CD8-positive, alpha-beta T cell (primary cell): ENCODE measurements at regions of chr14 and their contacts with region 1.

Region 1: DNA sequence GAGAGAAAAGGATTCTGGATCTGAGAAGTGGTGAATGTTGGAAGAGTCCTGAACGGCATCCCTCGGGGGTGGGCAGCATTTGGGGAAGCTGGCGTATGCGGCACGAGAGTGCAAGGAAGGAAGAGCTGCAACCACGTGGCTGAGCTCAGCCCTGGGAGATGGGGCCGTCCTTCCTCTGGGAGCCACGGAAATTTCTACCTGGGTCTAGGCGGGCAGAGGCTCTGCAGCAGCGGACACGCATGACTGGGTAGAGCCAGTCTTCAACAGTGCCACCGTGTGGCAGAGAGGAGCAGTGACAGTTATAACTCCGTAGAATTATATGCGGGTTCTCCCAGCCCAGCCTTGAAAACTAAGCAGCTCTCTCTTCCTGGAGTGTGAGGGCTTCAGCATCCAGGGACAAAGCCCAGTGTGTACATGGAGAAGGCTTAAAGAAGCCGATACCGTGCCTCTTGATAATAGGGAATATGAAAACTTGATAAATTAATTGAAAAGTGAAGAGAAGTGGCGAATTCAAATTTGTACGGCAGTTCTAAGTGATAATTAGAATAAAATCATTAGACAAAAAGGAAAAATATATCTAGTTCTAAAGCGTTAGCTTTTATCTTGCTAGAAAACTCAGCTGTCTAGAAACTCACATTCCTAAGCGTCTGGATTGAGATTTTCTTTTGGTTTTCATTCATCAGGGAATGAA is 82.9 kb upstream of the STXBP6 start:
- DNase-seq: peak; percentile 4 to 74 (median 29)
- ATAC-seq: peak; percentile 71
- H3K4me3 ChIP-seq: no peak overlapping the region
- H3K4me3 Mint-ChIP-seq: no peak overlapping the region
- H3K27ac ChIP-seq: no peak overlapping the region
- H3K27ac Mint-ChIP-seq: no peak overlapping the region
- H3K4me1 ChIP-seq: no peaks in the 10 kb centered on the region
- H3K4me1 Mint-ChIP-seq: no peaks in the 10 kb centered on the region
- H3K27me3 ChIP-seq: peaks cover 0 to 7% of the 10 kb centered on the region in 2 experiments
- H3K27me3 Mint-ChIP-seq: peaks cover 41% of the 10 kb centered on the region
- CTCF ChIP-seq: peak; percentile 60

Region 2: GRCh38 chr14:24481622-24482324 is 651.1 kb before region 1 on chr14:
- CTCF ChIA-PET with region 1: no interaction called
- POLR2A ChIA-PET with region 1: no interaction called
- intact Hi-C with region 1: loop called (anchors 5 kb)
- DNase-seq: peak in 6 of 9 experiments; percentile 11 to 55 (median 32)
- ATAC-seq: no peak
- H3K4me3 ChIP-seq: no peak overlapping the region
- H3K4me3 Mint-ChIP-seq: no peak overlapping the region
- H3K27ac ChIP-seq: no peak overlapping the region
- H3K27ac Mint-ChIP-seq: no peak overlapping the region
- H3K4me1 ChIP-seq: peaks cover 15% of the 10 kb centered on the region
- H3K4me1 Mint-ChIP-seq: no peaks in the 10 kb centered on the region
- H3K27me3 ChIP-seq: no peaks in the 10 kb centered on the region
- H3K27me3 Mint-ChIP-seq: no peaks in the 10 kb centered on the region
- CTCF ChIP-seq: no peak

Region 3: GRCh38 chr14:25178255-25178654 is 45.4 kb after region 1 on chr14:
- CTCF ChIA-PET with region 1: no interaction called
- POLR2A ChIA-PET with region 1: no interaction called
- intact Hi-C with region 1: no loop called
- DNase-seq: no peak
- ATAC-seq: no peak
- H3K4me3 ChIP-seq: no peak overlapping the region
- H3K4me3 Mint-ChIP-seq: no peak overlapping the region
- H3K27ac ChIP-seq: no peak overlapping the region
- H3K27ac Mint-ChIP-seq: no peak overlapping the region
- H3K4me1 ChIP-seq: no peaks in the 10 kb centered on the region
- H3K4me1 Mint-ChIP-seq: no peaks in the 10 kb centered on the region
- H3K27me3 ChIP-seq: no peaks in the 10 kb centered on the region
- H3K27me3 Mint-ChIP-seq: peaks cover 10% of the 10 kb centered on the region
- CTCF ChIP-seq: no peak